B cell (primary cell): ENCODE measurements at regions of chr16 and their contacts with region 1.

Region 1: DNA sequence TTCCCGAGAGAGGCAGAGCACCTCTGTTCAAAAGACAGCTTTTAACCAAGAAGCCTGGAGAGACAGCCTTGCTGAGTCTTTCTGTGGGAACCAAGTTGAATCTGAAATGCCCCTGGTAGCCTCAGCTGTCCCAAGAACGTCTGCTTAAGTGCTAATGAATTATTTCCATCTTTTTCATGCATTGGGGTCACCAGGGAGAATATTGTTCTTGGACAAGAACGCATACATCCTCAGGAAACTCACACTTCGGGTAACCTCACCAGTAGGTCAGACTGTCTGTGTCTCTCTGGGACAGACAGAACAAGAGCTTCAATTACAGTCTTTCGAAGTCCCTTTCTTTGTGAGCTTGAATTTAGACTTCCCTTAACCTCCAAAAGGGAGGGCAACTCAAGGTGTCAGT is 134.6 kb upstream of the ADAMTS18 start:
- DNase-seq: no peak
- ATAC-seq: no peak
- H3K4me3 ChIP-seq: no peak overlapping the region
- H3K4me3 Mint-ChIP-seq: no peak overlapping the region
- H3K27ac ChIP-seq: no peak overlapping the region
- H3K27ac Mint-ChIP-seq: no peak overlapping the region
- H3K4me1 ChIP-seq: no peaks in the 10 kb centered on the region
- H3K4me1 Mint-ChIP-seq: no peaks in the 10 kb centered on the region
- H3K27me3 ChIP-seq: peaks cover 0 to 2% (median 0%) of the 10 kb centered on the region in 4 experiments
- H3K27me3 Mint-ChIP-seq: peaks cover 12% of the 10 kb centered on the region
- CTCF ChIP-seq: no peak

Region 2: DNA sequence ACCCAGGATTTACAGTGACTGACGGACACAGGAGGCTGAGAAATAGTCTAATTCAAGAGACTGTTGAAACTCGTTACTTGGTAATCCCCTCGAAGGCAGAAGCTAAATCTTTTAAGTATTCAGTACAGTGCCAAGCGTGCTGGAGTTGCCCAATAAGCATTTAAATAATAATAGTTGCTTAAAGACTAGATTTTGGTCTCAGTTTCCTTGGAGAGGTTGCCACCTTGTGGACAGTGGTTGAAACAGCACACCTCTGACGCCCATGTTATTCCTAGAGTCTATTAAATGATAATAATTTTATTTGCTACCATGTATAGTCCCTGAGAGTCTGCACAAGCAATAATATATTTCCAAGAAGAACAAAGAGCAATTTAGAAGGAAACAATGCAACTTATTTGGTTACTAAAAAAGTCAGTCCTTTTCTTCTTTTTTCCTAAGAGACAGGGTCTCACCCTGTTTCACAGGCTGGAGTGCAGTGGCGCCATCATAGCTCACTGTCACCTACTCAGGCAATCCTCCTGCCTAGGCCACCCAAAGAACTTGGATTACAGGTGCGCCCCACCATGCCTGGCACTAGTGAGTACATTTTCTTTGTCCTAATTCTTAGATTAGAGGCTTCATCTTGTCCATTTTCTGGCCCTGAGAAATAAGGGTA is 14.9 kb after region 1 on chr16:
- CTCF ChIA-PET with region 1: interaction called, 29 read pairs
- POLR2A ChIA-PET with region 1: no interaction called
- intact Hi-C with region 1: no loop called
- DNase-seq: peak; percentile 59
- ATAC-seq: no peak
- H3K4me3 ChIP-seq: no peak overlapping the region
- H3K4me3 Mint-ChIP-seq: no peak overlapping the region
- H3K27ac ChIP-seq: no peak overlapping the region
- H3K27ac Mint-ChIP-seq: no peak overlapping the region
- H3K4me1 ChIP-seq: no peaks in the 10 kb centered on the region
- H3K4me1 Mint-ChIP-seq: no peaks in the 10 kb centered on the region
- H3K27me3 ChIP-seq: peaks cover 0 to 18% (median 4%) of the 10 kb centered on the region in 4 experiments
- H3K27me3 Mint-ChIP-seq: peaks cover 30% of the 10 kb centered on the region
- CTCF ChIP-seq: peak; percentile 94